ENCODE measurements at regions of chr3 and their contacts with region 1.

Region 1: DNA sequence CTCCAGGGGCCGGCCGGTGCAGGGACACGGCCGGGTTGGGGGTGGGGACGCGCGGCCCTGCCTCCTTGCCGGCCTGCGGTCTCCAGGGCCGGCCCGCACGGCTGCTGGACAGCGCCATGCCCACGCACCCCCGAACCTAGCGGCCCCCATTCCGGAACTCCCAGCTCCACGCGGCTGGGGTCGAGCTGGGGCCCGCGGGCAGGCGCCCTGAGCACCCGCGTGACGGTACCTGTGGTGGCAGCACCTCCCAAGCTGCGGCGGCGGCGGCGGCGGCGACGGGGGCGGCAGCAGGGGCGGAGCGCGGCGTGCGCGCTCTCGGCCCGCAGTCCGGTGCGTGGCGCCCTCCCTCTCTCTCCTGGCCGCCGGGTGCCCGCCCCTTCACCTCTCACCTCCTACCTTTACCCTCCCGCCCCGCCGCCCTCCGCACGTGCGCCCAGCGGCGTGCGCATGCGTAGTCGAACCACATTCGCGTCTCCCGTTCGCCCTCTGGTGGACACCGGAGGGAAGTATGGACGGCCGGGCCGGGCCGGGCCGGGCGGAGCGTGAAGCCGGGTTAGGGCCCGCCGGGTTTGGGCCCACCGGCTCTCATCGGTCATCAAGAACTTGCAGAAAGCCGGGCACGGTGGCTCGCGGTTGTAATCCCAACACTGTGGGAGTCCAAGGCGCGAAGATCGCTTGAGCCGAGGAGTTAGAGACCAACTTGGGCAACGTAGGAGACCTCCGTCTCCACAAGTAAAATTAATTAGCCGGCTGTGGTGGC is at the start of gene SCAP:
- DNase-seq: peak; percentile 86 to 97 (median 93)
- ATAC-seq: peak; percentile 92 to 95 (median 94)
- H3K4me3 ChIP-seq: peak within 1 kb of the TSS; percentile 67 to 77
- H3K4me3 Mint-ChIP-seq: peak within 1 kb of the TSS; percentile 88 to 97 (median 93)
- H3K27ac ChIP-seq: peak within 1 kb of the TSS; percentile 83
- H3K27ac Mint-ChIP-seq: peak within 1 kb of the TSS; percentile 87 to 91
- H3K4me1 ChIP-seq: peaks cover 16 to 32% of the 10 kb centered on the region in 2 experiments
- H3K4me1 Mint-ChIP-seq: peaks cover 32 to 41% (median 39%) of the 10 kb centered on the region in 3 donors
- H3K27me3 ChIP-seq: no peaks in the 10 kb centered on the region
- H3K27me3 Mint-ChIP-seq: no peaks in the 10 kb centered on the region
- total RNA-seq, gene SCAP: 86.6 to 108 (median 95.3) TPM

Region 2: DNA sequence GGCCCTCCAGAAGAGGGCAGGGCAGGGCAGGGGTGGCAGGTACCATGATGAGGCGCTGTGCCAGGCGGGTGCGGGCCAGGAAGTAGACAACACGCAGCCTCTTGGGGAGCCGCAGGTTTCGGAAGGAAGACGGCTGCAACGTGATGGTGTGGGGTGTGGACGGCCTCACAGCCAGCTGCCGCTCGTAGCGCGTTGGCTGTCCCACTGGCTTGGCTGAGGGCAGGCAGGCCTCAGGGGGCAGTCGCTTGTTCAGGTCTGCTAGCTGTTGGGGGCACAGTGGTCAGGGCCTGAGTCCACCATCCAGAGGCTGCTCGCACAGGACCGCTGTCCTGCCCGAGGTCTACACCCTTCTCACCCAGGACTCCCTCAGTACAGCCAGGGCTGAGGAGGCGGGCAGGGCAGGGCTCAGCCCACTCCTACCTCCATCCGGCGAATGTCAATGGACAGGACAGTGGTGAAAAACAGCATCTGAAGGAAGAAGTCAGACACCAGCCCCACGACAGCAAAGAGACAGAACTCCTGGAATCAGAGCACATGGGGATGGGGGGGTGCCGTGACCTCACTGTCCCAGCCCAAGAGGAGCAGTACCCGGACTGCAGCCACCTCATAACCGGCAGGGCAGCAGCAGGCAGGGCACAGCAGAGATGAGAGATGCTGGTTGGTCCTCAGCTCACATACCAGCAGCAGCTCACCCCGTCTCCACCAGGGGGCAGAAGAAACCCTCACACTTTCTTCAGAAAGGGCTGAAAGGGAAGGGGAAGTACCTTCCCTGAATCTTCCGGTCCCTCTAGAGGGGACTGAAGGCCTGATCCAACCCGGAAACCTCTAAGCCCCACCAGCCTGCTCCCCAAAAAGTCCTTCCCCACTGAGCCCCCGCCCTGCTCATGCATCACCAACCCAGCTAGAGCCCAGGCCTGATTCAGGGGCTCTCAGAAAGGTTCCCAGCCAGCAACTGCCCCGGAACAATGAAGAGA is 55.0 kb before region 1 on chr3:
- CTCF ChIA-PET with region 1: interaction called, 5 to 17 read pairs
- POLR2A ChIA-PET with region 1: no interaction called
- DNase-seq: peak; percentile 75 to 94 (median 86)
- ATAC-seq: peak; percentile 90 to 92 (median 92)
- H3K4me3 ChIP-seq: peak overlapping the region in 1 of 2 donors; percentile 1
- H3K4me3 Mint-ChIP-seq: peak overlapping the region; percentile 62 to 63 (median 63)
- H3K27ac ChIP-seq: peak overlapping the region; percentile 77
- H3K27ac Mint-ChIP-seq: peak overlapping the region; percentile 99
- H3K4me1 ChIP-seq: peaks cover 3 to 19% of the 10 kb centered on the region in 2 experiments
- H3K4me1 Mint-ChIP-seq: peaks cover 14 to 23% (median 19%) of the 10 kb centered on the region in 3 donors
- H3K27me3 ChIP-seq: no peaks in the 10 kb centered on the region
- H3K27me3 Mint-ChIP-seq: no peaks in the 10 kb centered on the region

Region 3: DNA sequence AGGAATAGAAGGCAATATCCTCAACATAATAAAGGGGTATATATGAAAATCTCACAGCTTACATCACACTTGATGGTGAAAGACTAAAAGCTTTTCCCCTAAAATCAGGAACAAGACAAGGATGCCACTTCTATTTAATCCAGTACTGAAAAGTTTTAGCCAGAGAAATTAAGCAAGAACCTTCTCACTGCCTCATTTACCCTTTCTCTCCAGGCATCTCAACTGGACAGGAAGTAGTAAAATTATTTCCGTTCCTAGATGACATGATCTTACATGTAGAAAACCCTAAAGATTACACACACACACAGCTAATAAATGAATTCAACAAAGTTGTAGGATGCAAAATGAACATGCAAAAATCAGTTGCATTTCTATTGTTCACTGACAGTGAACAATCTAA is 11.2 kb before region 1 on chr3:
- CTCF ChIA-PET with region 1: no interaction called
- POLR2A ChIA-PET with region 1: no interaction called
- DNase-seq: no peak
- ATAC-seq: no peak
- H3K4me3 ChIP-seq: no peak overlapping the region
- H3K4me3 Mint-ChIP-seq: no peak overlapping the region
- H3K27ac ChIP-seq: no peak overlapping the region
- H3K27ac Mint-ChIP-seq: no peak overlapping the region
- H3K4me1 ChIP-seq: no peaks in the 10 kb centered on the region
- H3K4me1 Mint-ChIP-seq: peaks cover 25 to 35% (median 30%) of the 10 kb centered on the region in 3 donors
- H3K27me3 ChIP-seq: no peaks in the 10 kb centered on the region
- H3K27me3 Mint-ChIP-seq: no peaks in the 10 kb centered on the region

Region 4: DNA sequence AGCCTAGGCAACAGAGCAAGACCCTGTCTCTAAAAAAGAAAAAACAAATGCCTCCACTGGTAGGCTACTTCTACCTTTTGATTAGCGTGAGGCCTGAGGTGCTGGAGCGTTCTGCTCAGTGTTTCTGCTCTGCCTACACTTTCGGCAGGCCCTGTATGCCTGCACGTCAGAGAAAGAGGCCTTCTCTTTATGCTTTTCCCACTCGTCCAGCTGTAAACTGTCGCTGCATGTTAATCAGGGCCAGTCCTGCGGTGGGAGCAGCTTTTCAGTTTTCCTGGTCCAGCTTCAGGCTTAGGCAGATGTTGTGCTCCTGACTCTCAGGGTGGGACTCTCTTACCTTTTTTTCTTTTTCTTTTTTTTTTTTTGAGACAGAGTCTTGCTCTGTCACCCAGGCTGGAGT is 77.7 kb after region 1 on chr3:
- CTCF ChIA-PET with region 1: no interaction called
- POLR2A ChIA-PET with region 1: no interaction called
- DNase-seq: no peak
- ATAC-seq: no peak
- H3K4me3 ChIP-seq: no peak overlapping the region
- H3K4me3 Mint-ChIP-seq: no peak overlapping the region
- H3K27ac ChIP-seq: no peak overlapping the region
- H3K27ac Mint-ChIP-seq: no peak overlapping the region
- H3K4me1 ChIP-seq: no peaks in the 10 kb centered on the region
- H3K4me1 Mint-ChIP-seq: no peaks in the 10 kb centered on the region
- H3K27me3 ChIP-seq: peaks cover 0 to 22% of the 10 kb centered on the region in 2 experiments
- H3K27me3 Mint-ChIP-seq: peaks cover 13 to 14% of the 10 kb centered on the region in 2 donors

Region 5: GRCh38 chr3:47781685-47782445 is 306.1 kb after region 1 on chr3 and contains the start of gene SMARCC1:
- CTCF ChIA-PET with region 1: interaction called in 1 of 2 experiments, 3 read pairs
- POLR2A ChIA-PET with region 1: interaction called in 1 of 2 experiments, 11 read pairs
- DNase-seq: peak; percentile 93 to 99 (median 96)
- ATAC-seq: peak; percentile 89 to 93 (median 92)
- H3K4me3 ChIP-seq: peak within 1 kb of the TSS; percentile 80 to 90
- H3K4me3 Mint-ChIP-seq: peak within 1 kb of the TSS; percentile 91 to 96 (median 92)
- H3K27ac ChIP-seq: peak within 1 kb of the TSS; percentile 92
- H3K27ac Mint-ChIP-seq: peak within 1 kb of the TSS; percentile 97 to 98
- H3K4me1 ChIP-seq: peaks cover 24 to 41% of the 10 kb centered on the region in 2 experiments
- H3K4me1 Mint-ChIP-seq: peaks cover 27 to 29% (median 28%) of the 10 kb centered on the region in 3 donors
- H3K27me3 ChIP-seq: no peaks in the 10 kb centered on the region
- H3K27me3 Mint-ChIP-seq: no peaks in the 10 kb centered on the region
- total RNA-seq, gene SMARCC1: 88.9 to 99.3 (median 92.4) TPM

Measured in T-cell (primary cell).